MCF 10A (cell line): ENCODE measurements at regions of chr14 and their contacts with region 1.

Region 1: GRCh38 chr14:56579345-56580220 is at the start of gene TMEM260:
- DNase-seq: peak; percentile 91
- H3K4me3 Mint-ChIP-seq: peak within 1 kb of the TSS; percentile 80
- H3K27ac Mint-ChIP-seq: peak within 1 kb of the TSS; percentile 94
- H3K4me1 Mint-ChIP-seq: peaks cover 30% of the 10 kb centered on the region
- H3K27me3 Mint-ChIP-seq: no peaks in the 10 kb centered on the region
- CTCF ChIP-seq: peak; percentile 76
- total RNA-seq, gene TMEM260: 19.8 and 20.8 TPM in 2 replicates

Region 2: GRCh38 chr14:56463271-56463890 is 116.2 kb before region 1 on chr14:
- CTCF ChIA-PET with region 1: no interaction called
- POLR2A ChIA-PET with region 1: no interaction called
- intact Hi-C with region 1: no loop called
- DNase-seq: no peak
- H3K4me3 Mint-ChIP-seq: no peak overlapping the region
- H3K27ac Mint-ChIP-seq: no peak overlapping the region
- H3K4me1 Mint-ChIP-seq: no peaks in the 10 kb centered on the region
- H3K27me3 Mint-ChIP-seq: peaks cover 13% of the 10 kb centered on the region
- CTCF ChIP-seq: no peak

Region 3: GRCh38 chr14:56569174-56569573 is 10.4 kb before region 1 on chr14:
- CTCF ChIA-PET with region 1: interaction called, 16 read pairs
- POLR2A ChIA-PET with region 1: interaction called, 5 read pairs
- intact Hi-C with region 1: no loop called
- DNase-seq: no peak
- H3K4me3 Mint-ChIP-seq: no peak overlapping the region
- H3K27ac Mint-ChIP-seq: no peak overlapping the region
- H3K4me1 Mint-ChIP-seq: no peaks in the 10 kb centered on the region
- H3K27me3 Mint-ChIP-seq: peaks cover 19% of the 10 kb centered on the region
- CTCF ChIP-seq: no peak

Region 4: GRCh38 chr14:56590535-56590960 is 11.0 kb after region 1 on chr14:
- CTCF ChIA-PET with region 1: interaction called, 10 read pairs
- POLR2A ChIA-PET with region 1: interaction called, 17 read pairs
- intact Hi-C with region 1: no loop called
- DNase-seq: no peak
- H3K4me3 Mint-ChIP-seq: no peak overlapping the region
- H3K27ac Mint-ChIP-seq: no peak overlapping the region
- H3K4me1 Mint-ChIP-seq: no peaks in the 10 kb centered on the region
- H3K27me3 Mint-ChIP-seq: no peaks in the 10 kb centered on the region
- CTCF ChIP-seq: no peak

Region 5: DNA sequence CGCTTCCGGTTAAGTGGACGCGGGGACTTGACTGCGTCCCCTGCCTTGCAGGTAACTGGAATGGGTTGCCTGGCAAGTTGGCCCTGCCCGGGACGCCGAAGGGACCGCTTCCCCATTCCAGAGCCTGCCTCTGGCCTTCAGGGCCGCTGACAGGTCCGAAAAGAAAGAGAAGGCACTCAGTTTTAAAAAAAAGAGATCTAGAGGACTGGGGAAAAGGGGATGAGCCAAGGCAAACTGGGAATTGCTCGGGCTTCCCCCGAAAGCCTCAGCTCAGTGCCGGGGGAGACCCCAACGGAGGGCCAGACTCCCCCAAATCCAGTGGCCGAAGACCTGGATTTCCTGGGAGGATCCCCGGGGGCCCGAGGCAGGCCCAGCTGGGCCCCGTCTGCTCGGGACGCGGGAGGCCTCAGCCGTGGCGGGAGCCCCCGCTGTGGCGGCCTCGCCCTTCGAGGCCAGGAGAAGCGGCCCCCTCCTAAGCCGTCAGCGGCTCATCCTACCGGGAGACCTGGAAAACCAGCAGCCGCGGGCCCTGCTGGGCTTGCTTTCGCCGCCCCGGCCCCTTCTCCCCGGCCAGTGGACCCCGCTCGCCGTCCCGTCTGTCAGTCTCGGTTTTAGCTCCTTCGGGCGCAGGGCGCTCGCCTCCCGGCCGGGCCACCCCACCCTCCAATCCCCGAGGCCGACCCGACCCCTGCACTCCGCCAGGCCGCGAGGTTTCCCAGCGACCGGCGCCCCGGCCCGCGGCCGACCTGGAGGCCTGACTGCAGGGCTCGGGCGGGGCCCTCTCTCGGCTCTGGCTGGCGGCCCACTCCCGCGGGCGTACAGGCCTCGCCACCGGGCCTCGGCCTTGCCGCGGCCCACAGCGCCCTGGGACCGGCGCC is 218.2 kb after region 1 on chr14:
- CTCF ChIA-PET with region 1: no interaction called
- POLR2A ChIA-PET with region 1: no interaction called
- intact Hi-C with region 1: no loop called
- DNase-seq: no peak
- H3K4me3 Mint-ChIP-seq: no peak overlapping the region
- H3K27ac Mint-ChIP-seq: no peak overlapping the region
- H3K4me1 Mint-ChIP-seq: no peaks in the 10 kb centered on the region
- H3K27me3 Mint-ChIP-seq: peaks cover 45% of the 10 kb centered on the region
- CTCF ChIP-seq: no peak

Region 6: GRCh38 chr14:56855891-56856461 is 276.4 kb after region 1 on chr14:
- CTCF ChIA-PET with region 1: no interaction called
- POLR2A ChIA-PET with region 1: no interaction called
- intact Hi-C with region 1: no loop called
- DNase-seq: no peak
- H3K4me3 Mint-ChIP-seq: no peak overlapping the region
- H3K27ac Mint-ChIP-seq: no peak overlapping the region
- H3K4me1 Mint-ChIP-seq: no peaks in the 10 kb centered on the region
- H3K27me3 Mint-ChIP-seq: peaks cover 56% of the 10 kb centered on the region
- CTCF ChIP-seq: no peak